ENCODE measurements at regions of chr10 and their contacts with region 1.

Region 1: GRCh38 chr10:22230158-22230833 is 12.5 kb upstream of the EBLN1 start:
- DNase-seq: no peak
- H3K4me3 ChIP-seq: peak overlapping the region; percentile 84 to 95 (median 88)
- H3K27ac ChIP-seq: no peak overlapping the region
- H3K4me1 ChIP-seq: no peaks in the 10 kb centered on the region
- H3K27me3 ChIP-seq: peaks cover 0 to 2% (median 0%) of the 10 kb centered on the region in 4 experiments; a peak in 1 of 7 replicates
- CTCF ChIP-seq: no peak
- EP300 ChIP-seq: no peak
- POLR2A ChIP-seq: no peak
- RAD21 ChIP-seq: no peak

Region 2: DNA sequence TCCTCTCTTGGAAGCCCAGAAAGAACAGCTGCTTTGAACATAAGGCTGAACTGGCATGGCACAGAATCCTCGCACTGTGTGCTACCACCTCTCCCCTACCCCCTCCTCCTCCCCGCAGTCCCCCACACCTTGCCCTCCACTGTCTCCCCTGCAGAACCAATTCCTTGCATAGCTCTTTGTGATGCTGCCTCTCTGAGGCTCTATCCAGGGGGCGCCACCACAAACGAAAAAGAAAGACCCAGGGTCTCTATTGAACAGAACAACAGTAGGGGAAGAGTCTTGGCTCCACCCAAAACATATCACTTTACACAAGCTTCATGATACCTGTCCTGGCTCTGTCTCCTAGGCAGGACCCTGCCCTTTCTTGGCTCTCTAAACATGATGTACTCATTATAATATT is 13.7 kb after region 1 on chr10:
- CTCF ChIA-PET with region 1: interaction called, 20 read pairs
- POLR2A ChIA-PET with region 1: interaction called, 3 read pairs
- DNase-seq: peak in 1 of 2 experiments; percentile 58
- H3K4me3 ChIP-seq: no peak overlapping the region
- H3K27ac ChIP-seq: no peak overlapping the region
- H3K4me1 ChIP-seq: no peaks in the 10 kb centered on the region; a peak in 1 of 7 replicates
- H3K27me3 ChIP-seq: no peaks in the 10 kb centered on the region
- CTCF ChIP-seq: peak in 2 of 3 experiments; percentile 30 to 32; a peak in 3 of 4 replicates
- EP300 ChIP-seq: no peak
- POLR2A ChIP-seq: no peak
- RAD21 ChIP-seq: peak; percentile 8 to 36; a peak in 3 of 4 replicates

Region 3: GRCh38 chr10:22301193-22301592 is 70.9 kb after region 1 on chr10:
- CTCF ChIA-PET with region 1: no interaction called
- POLR2A ChIA-PET with region 1: no interaction called
- DNase-seq: no peak
- H3K4me3 ChIP-seq: no peak overlapping the region
- H3K27ac ChIP-seq: no peak overlapping the region
- H3K4me1 ChIP-seq: no peaks in the 10 kb centered on the region
- H3K27me3 ChIP-seq: no peaks in the 10 kb centered on the region
- CTCF ChIP-seq: peak; percentile 16 to 48 (median 19); a peak in 3 of 4 replicates
- EP300 ChIP-seq: no peak
- POLR2A ChIP-seq: no peak
- RAD21 ChIP-seq: peak in 1 of 2 experiments; percentile 42; a peak in 1 of 4 replicates